OCI-LY7 (cell line): ENCODE measurements at regions of chr1 and their contacts with region 1.

Region 1: GRCh38 chr1:204806943-204807687 is 63.5 kb upstream of the NFASC start:
- DNase-seq: peak; percentile 91
- H3K4me3 ChIP-seq: peak overlapping the region; percentile 70
- H3K27ac ChIP-seq: no peak overlapping the region
- H3K4me1 ChIP-seq: peaks cover 27% of the 10 kb centered on the region
- CTCF ChIP-seq: peak; percentile 100

Region 2: GRCh38 chr1:204431310-204432165 is 375.6 kb before region 1 on chr1:
- CTCF ChIA-PET with region 1: no interaction called
- POLR2A ChIA-PET with region 1: no interaction called
- intact Hi-C with region 1: loop called (anchors 2 kb)
- DNase-seq: peak; percentile 82
- H3K4me3 ChIP-seq: no peak overlapping the region
- H3K27ac ChIP-seq: no peak overlapping the region
- H3K4me1 ChIP-seq: no peaks in the 10 kb centered on the region
- CTCF ChIP-seq: peak; percentile 97

Region 3: GRCh38 chr1:204565617-204566582 is 241.2 kb before region 1 on chr1:
- CTCF ChIA-PET with region 1: interaction called, 33 read pairs
- POLR2A ChIA-PET with region 1: interaction called, 4 read pairs
- intact Hi-C with region 1: loop called (anchors 1 kb)
- DNase-seq: peak; percentile 90
- H3K4me3 ChIP-seq: peak overlapping the region; percentile 10
- H3K27ac ChIP-seq: peak overlapping the region; percentile 77
- H3K4me1 ChIP-seq: peaks cover 40% of the 10 kb centered on the region
- CTCF ChIP-seq: peak; percentile 90

Region 4: DNA sequence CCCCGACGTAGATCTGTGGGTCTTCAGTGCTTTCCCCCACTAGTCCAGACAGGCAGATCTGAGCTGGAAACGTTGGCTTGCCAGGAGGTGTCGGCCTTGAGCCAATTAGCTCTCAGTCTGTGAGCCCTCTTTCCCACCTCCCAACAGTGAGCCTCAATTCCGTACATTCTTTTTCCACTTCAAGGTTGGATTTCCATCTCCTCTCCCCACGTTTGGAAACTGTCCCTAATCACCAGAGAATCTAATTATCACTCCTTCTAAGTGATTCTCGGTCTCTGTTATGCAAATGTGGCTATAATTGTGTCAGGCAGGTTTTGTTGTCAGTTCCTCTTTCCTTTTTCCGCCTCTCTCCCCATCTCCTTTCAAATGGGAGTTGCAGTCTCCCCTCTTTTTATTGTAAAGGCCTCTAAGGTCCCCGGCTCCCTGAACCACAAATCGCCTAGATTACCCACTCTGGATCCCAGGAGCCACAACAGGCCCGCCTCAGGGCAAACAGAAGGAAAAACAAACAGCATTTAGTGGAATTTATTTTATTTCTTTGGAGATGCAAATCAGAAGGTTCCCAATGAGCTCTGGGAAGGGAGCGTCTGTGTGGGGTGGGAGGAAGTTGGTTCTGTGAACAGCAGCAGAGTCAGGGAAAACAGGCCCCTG is 92.1 kb before region 1 on chr1:
- CTCF ChIA-PET with region 1: interaction called, 6 read pairs
- POLR2A ChIA-PET with region 1: interaction called, 3 read pairs
- intact Hi-C with region 1: loop called (anchors 1 kb)
- DNase-seq: peak; percentile 65
- H3K4me3 ChIP-seq: peak overlapping the region; percentile 62
- H3K27ac ChIP-seq: peak overlapping the region; percentile 62
- H3K4me1 ChIP-seq: peaks cover 72% of the 10 kb centered on the region
- CTCF ChIP-seq: peak; percentile 73

Region 5: GRCh38 chr1:204726478-204726877 is 80.6 kb before region 1 on chr1:
- CTCF ChIA-PET with region 1: no interaction called
- POLR2A ChIA-PET with region 1: no interaction called
- intact Hi-C with region 1: no loop called
- DNase-seq: no peak
- H3K4me3 ChIP-seq: no peak overlapping the region
- H3K27ac ChIP-seq: no peak overlapping the region
- H3K4me1 ChIP-seq: no peaks in the 10 kb centered on the region
- CTCF ChIP-seq: no peak

Region 6: DNA sequence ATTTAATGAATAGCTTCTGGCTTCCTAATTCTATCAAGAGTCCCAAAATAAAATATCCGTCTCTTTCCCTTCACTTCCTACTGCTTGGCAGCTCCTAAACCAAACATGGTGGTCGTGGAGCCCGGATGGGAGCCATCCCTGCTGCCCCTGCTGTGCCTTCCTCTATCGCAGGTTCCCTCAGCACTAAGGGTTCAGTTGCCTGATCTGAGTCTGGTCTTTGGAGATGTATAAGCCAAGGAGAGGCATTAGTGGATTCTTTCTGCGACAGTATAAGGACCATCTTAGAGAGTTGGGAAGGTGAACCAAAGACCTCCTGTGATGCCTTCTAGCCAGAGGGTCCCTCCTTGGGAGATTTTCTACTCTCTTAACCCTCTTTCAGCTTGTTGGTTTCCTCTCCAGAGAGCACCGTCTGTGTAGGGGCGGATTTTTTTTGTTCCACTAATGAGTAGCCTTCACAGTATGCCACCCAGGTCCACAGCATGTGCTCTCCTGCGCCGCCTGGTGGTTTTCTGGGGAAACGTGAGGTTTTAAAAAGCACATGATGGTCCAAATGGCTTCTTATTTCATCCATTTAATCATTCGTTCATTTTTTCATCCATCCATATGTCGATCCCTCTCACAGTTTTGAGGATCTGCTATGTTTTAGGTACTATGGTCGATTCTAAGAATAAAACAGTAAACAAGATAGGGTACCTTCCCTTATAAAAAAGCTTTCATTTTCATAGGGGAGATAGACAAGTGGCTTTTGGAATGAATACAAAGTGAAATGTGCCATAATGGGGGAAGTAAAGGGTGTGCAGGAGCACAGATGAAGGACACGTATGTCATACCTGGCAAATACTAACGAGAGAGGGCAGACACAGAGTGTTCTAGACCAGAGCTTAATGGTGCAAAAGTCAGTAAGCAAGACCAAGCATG is 134.6 kb after region 1 on chr1:
- CTCF ChIA-PET with region 1: no interaction called
- POLR2A ChIA-PET with region 1: no interaction called
- intact Hi-C with region 1: loop called (anchors 1 kb)
- DNase-seq: peak; percentile 57
- H3K4me3 ChIP-seq: no peak overlapping the region
- H3K27ac ChIP-seq: no peak overlapping the region
- H3K4me1 ChIP-seq: no peaks in the 10 kb centered on the region
- CTCF ChIP-seq: peak; percentile 94